MCF 10A (cell line): ENCODE measurements at regions of chrX and their contacts with region 1.

Region 1: DNA sequence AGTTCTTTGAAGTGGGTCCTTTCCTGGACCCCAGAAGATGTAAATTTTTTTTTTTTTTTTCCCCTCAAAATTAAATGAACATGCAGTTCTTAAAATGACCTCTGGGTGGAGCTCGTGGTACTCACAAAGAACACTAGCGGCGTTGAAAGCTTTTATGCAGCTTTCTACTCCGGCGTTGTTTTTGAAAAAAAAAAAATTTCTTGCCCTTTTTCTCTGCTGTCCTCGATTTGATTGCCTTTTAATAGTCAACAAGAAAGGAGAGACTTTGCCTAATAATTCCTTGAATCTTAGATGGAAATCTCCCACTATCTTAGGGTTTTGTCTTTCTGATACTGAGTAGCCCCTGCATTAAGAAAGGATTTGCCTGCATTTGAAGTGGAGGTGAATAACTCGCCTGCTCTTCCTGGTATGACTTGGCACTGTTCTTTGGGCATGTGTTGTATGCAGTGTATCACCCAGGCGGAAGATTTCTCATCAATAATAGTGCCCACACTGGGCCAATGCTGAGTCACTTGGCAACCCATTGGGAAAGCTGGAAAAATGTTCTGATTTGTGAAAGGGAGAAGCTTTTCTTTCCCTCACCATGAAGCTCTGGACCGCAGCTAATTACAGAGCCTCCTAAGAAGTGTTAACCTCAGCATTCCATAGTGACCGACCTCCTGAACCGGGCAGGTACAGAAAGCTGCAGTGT is 104.0 kb downstream of the PHEX start:
- DNase-seq: peak; percentile 87
- H3K4me3 Mint-ChIP-seq: peak overlapping the region; percentile 49
- H3K27ac Mint-ChIP-seq: peak overlapping the region; percentile 91
- H3K4me1 Mint-ChIP-seq: peaks cover 31% of the 10 kb centered on the region
- H3K27me3 Mint-ChIP-seq: no peaks in the 10 kb centered on the region
- CTCF ChIP-seq: peak; percentile 78

Region 2: DNA sequence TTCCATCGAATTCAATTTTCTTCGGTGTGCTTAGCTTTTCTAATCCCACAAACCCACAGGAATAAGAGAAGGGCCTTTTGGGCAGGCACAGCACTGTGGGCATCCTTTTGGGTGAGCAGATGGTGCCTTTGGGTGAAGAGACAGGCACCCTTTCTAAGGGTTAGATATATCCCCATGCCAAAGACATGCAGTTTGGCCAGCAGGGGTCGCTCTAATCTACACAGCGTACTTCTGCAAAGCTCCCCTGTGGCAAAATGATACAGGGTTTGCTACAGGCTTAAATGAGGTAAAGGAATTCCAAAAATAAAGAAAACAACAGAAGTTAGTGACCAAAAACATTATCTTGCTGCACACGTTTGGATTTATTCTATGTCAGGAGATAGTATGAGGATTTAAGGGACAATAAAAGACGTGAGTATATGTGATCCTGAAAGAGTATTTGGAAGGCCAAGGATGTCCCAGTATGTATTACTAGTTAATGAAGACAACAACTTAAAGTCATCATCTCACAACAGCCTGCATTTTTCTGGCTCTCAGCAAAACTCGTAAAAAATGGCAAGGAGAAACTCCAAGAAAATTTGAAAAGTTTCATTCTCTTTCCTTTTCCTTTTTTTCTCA is 54.6 kb before region 1 on chrX:
- CTCF ChIA-PET with region 1: interaction called, 3 read pairs
- POLR2A ChIA-PET with region 1: interaction called, 3 read pairs
- intact Hi-C with region 1: loop called (anchors 1 kb)
- DNase-seq: peak; percentile 79
- H3K4me3 Mint-ChIP-seq: no peak overlapping the region
- H3K27ac Mint-ChIP-seq: no peak overlapping the region
- H3K4me1 Mint-ChIP-seq: peaks cover 6% of the 10 kb centered on the region
- H3K27me3 Mint-ChIP-seq: peaks cover 53% of the 10 kb centered on the region
- CTCF ChIP-seq: peak; percentile 86

Region 3: DNA sequence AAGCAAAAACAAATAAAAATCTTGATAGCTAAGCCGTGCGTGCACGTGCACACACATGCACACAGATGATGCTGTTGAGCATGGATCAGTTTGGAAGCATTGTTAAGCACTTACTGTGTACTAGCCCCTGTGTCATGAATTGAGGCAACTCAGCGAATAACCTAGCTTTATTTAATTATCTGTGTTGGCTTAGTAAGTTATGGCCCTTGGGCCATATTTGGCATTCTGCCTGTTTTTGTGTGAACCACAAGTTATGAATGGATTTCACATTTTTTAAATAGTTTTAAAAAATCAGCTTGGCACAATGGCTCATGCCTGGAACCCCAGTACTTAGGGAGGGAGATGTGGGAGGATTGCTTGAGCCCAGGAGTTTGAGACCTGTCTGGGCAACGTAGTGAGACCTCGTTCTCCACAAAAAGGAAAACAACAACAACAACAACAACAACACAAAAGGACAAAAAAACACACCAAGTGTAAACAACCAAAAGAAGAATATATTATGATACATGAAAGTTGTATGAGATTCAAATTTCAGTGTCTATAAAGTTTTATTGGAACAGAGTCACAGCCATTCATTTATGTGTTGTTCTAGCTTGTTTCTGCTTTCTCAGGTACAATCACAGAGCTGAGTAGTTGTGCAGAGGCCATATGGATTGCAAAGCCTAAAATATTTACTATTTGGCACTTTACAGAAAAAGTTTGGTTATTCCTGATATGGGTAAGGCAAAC is 23.1 kb after region 1 on chrX:
- CTCF ChIA-PET with region 1: interaction called, 23 read pairs
- POLR2A ChIA-PET with region 1: interaction called, 3 read pairs
- intact Hi-C with region 1: no loop called
- DNase-seq: peak; percentile 33
- H3K4me3 Mint-ChIP-seq: no peak overlapping the region
- H3K27ac Mint-ChIP-seq: no peak overlapping the region
- H3K4me1 Mint-ChIP-seq: peaks cover 6% of the 10 kb centered on the region
- H3K27me3 Mint-ChIP-seq: peaks cover 36% of the 10 kb centered on the region
- CTCF ChIP-seq: no peak

Region 4: GRCh38 chrX:22365460-22365859 is 229.3 kb after region 1 on chrX:
- CTCF ChIA-PET with region 1: interaction called, 3 read pairs
- POLR2A ChIA-PET with region 1: interaction called, 4 read pairs
- intact Hi-C with region 1: loop called (anchors 1 kb)
- DNase-seq: peak; percentile 96
- H3K4me3 Mint-ChIP-seq: peak overlapping the region; percentile 38
- H3K27ac Mint-ChIP-seq: peak overlapping the region; percentile 83
- H3K4me1 Mint-ChIP-seq: peaks cover 9% of the 10 kb centered on the region
- H3K27me3 Mint-ChIP-seq: peaks cover 57% of the 10 kb centered on the region
- CTCF ChIP-seq: no peak

Region 5: DNA sequence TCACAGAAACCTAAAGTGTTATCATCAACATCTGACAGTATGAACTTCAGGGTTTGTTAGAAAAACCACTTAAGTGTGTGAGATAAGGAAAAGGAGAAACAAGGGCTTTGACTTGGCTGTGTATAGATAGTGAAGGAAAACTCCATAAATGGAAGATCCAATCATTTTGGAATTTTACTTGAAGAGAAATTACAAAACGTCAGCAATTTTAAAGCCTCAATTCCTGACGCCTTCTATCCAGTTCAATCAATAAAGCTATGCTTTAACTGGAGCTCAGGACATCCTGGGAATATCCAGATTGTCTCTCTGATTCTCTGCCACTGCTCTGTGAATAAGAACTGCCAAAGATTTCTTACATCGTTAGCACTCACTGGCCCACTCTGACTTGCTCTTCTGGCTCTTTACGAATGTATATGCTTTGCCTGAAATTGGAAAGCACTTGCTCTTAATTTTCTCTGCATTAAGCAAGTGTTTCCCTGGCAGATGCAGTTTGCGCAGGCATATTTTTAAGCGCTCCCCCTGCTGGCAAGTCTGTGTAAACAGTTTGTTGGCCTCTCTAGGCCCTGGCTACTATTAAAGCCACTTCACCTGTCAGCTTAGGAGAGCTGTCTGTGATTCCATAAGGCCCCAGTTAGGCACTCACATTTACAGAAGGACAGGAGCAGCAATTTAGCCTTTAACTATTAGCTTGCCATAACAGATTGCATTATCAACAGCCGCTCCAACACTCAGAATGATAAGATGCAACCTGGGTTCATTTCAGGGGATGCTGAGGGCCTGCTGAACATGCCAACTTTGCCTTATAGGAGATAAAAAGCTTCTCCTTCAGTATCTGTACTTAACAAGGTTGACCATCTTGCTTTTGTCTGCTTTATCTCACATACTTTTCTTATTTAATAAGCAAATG is 612.2 kb after region 1 on chrX:
- CTCF ChIA-PET with region 1: interaction called, 23 read pairs
- POLR2A ChIA-PET with region 1: no interaction called
- intact Hi-C with region 1: loop called (anchors 1 kb)
- DNase-seq: peak; percentile 68
- H3K4me3 Mint-ChIP-seq: no peak overlapping the region
- H3K27ac Mint-ChIP-seq: no peak overlapping the region
- H3K4me1 Mint-ChIP-seq: no peaks in the 10 kb centered on the region
- H3K27me3 Mint-ChIP-seq: peaks cover 79% of the 10 kb centered on the region
- CTCF ChIP-seq: peak; percentile 74

Region 6: DNA sequence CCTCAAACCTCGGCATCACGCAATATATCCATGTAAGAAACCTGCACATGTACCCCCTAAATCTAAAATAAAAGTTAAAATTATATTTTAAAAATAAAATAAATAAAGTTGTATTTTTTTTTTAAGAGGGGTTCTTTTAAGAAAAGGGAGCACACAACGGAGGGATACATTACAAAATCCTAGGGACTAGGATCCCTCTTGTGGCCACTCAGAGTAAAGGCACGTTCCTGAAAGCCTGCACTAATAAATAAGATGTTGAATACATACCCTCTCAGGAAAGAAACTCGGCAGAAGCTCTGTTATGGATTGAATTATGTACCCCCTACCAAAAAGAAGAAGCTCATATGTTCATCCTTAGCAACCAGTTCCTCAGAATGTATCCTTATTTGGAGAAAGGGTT is 1480.2 kb after region 1 on chrX:
- CTCF ChIA-PET with region 1: interaction called, 5 read pairs
- POLR2A ChIA-PET with region 1: no interaction called
- intact Hi-C with region 1: loop called (anchors 5 kb)
- DNase-seq: peak; percentile 27
- H3K4me3 Mint-ChIP-seq: no peak overlapping the region
- H3K27ac Mint-ChIP-seq: no peak overlapping the region
- H3K4me1 Mint-ChIP-seq: no peaks in the 10 kb centered on the region
- H3K27me3 Mint-ChIP-seq: peaks cover 41% of the 10 kb centered on the region
- CTCF ChIP-seq: peak; percentile 50